ENCODE measurements at regions of chr16 and their contacts with region 1.

Region 1: GRCh38 chr16:11255737-11256660 is at the start of gene SOCS1:
- DNase-seq: peak; percentile 87 to 88
- ATAC-seq: peak; percentile 73
- total RNA-seq, gene SOCS1: 4.7 to 4.9 TPM

Region 2: DNA sequence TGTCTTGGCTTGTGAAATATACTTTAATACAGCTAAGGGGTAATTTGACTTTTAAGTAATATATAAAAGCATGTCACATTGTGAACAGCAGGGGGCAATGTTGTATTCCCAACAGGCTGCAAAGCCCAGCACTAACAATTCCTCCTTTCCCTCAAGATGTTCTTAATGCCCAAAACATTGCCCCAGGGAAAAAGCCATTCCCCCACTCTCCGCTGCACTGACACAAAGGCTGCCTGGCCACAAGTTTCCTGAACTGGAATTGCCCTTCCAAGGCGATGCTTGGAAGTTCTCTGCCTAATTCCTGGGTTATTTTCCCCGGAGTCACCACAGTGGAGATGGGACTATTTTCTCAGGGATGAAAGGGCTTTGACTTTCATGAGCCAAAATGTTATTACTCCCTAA is 284.4 kb before region 1 on chr16:
- intact Hi-C with region 1: loop called (anchors 2 to 10 kb)
- DNase-seq: no peak
- ATAC-seq: peak; percentile 72

Region 3: DNA sequence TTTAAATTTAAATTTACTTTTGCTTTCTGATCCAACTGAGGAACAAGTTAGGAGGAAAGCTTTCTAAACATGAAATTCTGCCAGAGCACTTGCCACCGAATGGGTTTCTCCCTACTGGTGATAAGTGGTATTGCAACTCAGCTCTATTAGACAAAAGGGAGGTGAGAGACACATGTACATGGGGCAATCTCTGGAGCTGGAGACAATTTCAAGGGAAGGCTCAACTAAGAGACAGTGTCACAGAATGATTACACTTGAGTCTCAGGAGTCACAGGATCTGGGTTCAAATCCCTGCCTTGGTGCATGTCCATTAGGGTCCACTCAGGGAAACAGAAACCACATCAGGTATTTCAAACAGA is 37.4 kb before region 1 on chr16:
- intact Hi-C with region 1: no loop called
- DNase-seq: no peak
- ATAC-seq: no peak

Measured in left colon (tissue), 2 donors.